T-cell (primary cell): ENCODE measurements at regions of chr5 and their contacts with region 1.

Region 1: GRCh38 chr5:96714951-96715451 is 52.8 kb downstream of the CAST start:
- DNase-seq: peak in 31 of 35 experiments; percentile 15 to 76 (median 39)
- ATAC-seq: peak; percentile 57 to 77 (median 68)
- H3K4me3 ChIP-seq: no peak overlapping the region
- H3K4me3 Mint-ChIP-seq: no peak overlapping the region
- H3K27ac ChIP-seq: peak overlapping the region; percentile 64
- H3K27ac Mint-ChIP-seq: peak overlapping the region; percentile 71 to 79
- H3K4me1 ChIP-seq: peaks cover 9% of the 10 kb centered on the region in 2 experiments
- H3K4me1 Mint-ChIP-seq: peaks cover 65 to 83% (median 78%) of the 10 kb centered on the region in 3 donors
- H3K27me3 ChIP-seq: no peaks in the 10 kb centered on the region
- H3K27me3 Mint-ChIP-seq: no peaks in the 10 kb centered on the region

Region 2: GRCh38 chr5:96702503-96703383 is 12.3 kb before region 1 on chr5:
- CTCF ChIA-PET with region 1: interaction called, 3 to 23 read pairs
- POLR2A ChIA-PET with region 1: interaction called, 21 to 120 read pairs
- DNase-seq: peak; percentile 36 to 85 (median 79)
- ATAC-seq: peak; percentile 75 to 89 (median 82)
- H3K4me3 ChIP-seq: peak overlapping the region; percentile 74
- H3K4me3 Mint-ChIP-seq: peak overlapping the region; percentile 86 to 95 (median 91)
- H3K27ac ChIP-seq: peak overlapping the region; percentile 88
- H3K27ac Mint-ChIP-seq: peak overlapping the region; percentile 81 to 89
- H3K4me1 ChIP-seq: peaks cover 3 to 14% of the 10 kb centered on the region in 2 experiments
- H3K4me1 Mint-ChIP-seq: peaks cover 30 to 66% (median 53%) of the 10 kb centered on the region in 3 donors
- H3K27me3 ChIP-seq: no peaks in the 10 kb centered on the region
- H3K27me3 Mint-ChIP-seq: no peaks in the 10 kb centered on the region

Region 3: GRCh38 chr5:97383996-97384395 is 669.0 kb after region 1 on chr5:
- CTCF ChIA-PET with region 1: no interaction called
- POLR2A ChIA-PET with region 1: no interaction called
- DNase-seq: no peak
- ATAC-seq: no peak
- H3K4me3 ChIP-seq: no peak overlapping the region
- H3K4me3 Mint-ChIP-seq: no peak overlapping the region
- H3K27ac ChIP-seq: no peak overlapping the region
- H3K27ac Mint-ChIP-seq: no peak overlapping the region
- H3K4me1 ChIP-seq: no peaks in the 10 kb centered on the region
- H3K4me1 Mint-ChIP-seq: no peaks in the 10 kb centered on the region
- H3K27me3 ChIP-seq: no peaks in the 10 kb centered on the region
- H3K27me3 Mint-ChIP-seq: no peaks in the 10 kb centered on the region